ENCODE measurements at regions of chr1 and their contacts with region 1.

Region 1: DNA sequence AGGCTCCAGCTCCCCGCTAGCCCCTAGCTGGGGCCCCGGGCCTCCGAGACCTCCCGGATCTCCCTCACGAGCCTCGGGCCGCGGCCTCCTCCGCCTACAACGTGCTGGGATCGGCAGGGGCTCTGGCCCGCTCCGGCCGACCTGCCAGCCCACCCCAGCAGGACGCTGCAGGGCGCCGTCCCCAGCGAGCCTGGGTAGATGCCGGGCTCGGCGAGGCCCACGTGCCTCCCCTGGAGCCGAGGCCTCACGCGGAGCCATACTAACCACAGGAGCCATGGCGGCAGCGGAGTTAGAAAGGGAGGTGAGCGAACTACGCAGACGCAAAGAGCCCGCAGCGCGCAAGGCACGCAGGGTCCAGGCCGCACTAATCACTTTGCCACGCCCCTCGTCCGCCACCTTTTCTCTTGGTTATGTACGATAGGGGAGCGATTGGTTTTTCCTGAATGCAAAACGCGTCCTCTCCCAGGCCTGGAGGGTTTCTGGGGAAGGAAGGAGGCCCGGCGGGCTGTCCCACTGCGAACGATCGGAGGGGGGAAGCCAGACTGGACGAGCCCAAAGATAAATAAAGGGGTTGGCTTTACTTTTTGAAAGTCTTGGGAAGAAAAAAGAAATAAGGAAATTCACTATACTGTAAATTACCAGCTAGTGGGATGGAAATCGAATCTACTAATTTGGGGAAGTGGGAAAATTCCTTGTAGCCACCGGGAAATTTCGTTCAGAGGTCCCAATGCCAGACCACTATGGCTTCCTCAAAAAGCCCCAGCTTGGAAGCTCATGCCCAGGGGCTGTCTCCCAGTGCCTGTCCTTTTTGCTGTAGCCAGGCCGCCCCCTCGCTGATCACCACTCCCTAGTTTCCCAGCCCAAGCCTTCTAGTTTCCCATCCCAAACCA is at the start of gene RPL22:
- DNase-seq: peak; percentile 94
- ATAC-seq: peak; percentile 99
- H3K4me3 ChIP-seq: peak within 1 kb of the TSS; percentile 93
- H3K27ac ChIP-seq: peak within 1 kb of the TSS; percentile 85
- H3K4me1 ChIP-seq: peaks cover 6% of the 10 kb centered on the region
- H3K27me3 ChIP-seq: no peaks in the 10 kb centered on the region
- CTCF ChIP-seq: no peak
- EP300 ChIP-seq: peak in 1 of 2 experiments; percentile 31; a peak in 2 of 4 replicates
- POLR2A ChIP-seq: peak; percentile 97
- RAD21 ChIP-seq: no peak
- polyA plus RNA-seq, gene RPL22: 437 to 560 TPM

Region 2: GRCh38 chr1:6026095-6026809 is 173.3 kb before region 1 on chr1:
- CTCF ChIA-PET with region 1: no interaction called
- POLR2A ChIA-PET with region 1: no interaction called
- RAD21 ChIA-PET with region 1: no interaction called
- SMC1A ChIA-PET with region 1: no interaction called
- in situ Hi-C with region 1: no loop called
- intact Hi-C with region 1: loop called (anchors 5 kb)
- DNase-seq: peak; percentile 83
- ATAC-seq: peak; percentile 90
- H3K4me3 ChIP-seq: peak overlapping the region; percentile 89
- H3K27ac ChIP-seq: peak overlapping the region; percentile 82
- H3K4me1 ChIP-seq: peaks cover 40% of the 10 kb centered on the region
- H3K27me3 ChIP-seq: no peaks in the 10 kb centered on the region
- CTCF ChIP-seq: 0 out of 6 replicates have a peak, but pooled peaks of 1 of the 3 experiments have one; percentile 4
- EP300 ChIP-seq: peak in 1 of 2 experiments; percentile 15; a peak in 1 of 4 replicates
- POLR2A ChIP-seq: peak; percentile 88
- RAD21 ChIP-seq: no peak

Region 3: GRCh38 chr1:6188466-6188865 is 11.1 kb before region 1 on chr1:
- CTCF ChIA-PET with region 1: interaction called, 11 read pairs
- POLR2A ChIA-PET with region 1: no interaction called
- RAD21 ChIA-PET with region 1: interaction called, 4 read pairs
- SMC1A ChIA-PET with region 1: interaction called, 3 read pairs
- in situ Hi-C with region 1: no loop called
- intact Hi-C with region 1: no loop called
- DNase-seq: no peak
- ATAC-seq: no peak
- H3K4me3 ChIP-seq: no peak overlapping the region
- H3K27ac ChIP-seq: no peak overlapping the region
- H3K4me1 ChIP-seq: no peaks in the 10 kb centered on the region
- H3K27me3 ChIP-seq: no peaks in the 10 kb centered on the region
- CTCF ChIP-seq: no peak
- EP300 ChIP-seq: no peak
- POLR2A ChIP-seq: no peak
- RAD21 ChIP-seq: no peak

Measured in GM12878 (cell line).